CD8-positive, alpha-beta T cell (primary cell): ENCODE measurements at regions of chr7 and their contacts with region 1.

Region 1: DNA sequence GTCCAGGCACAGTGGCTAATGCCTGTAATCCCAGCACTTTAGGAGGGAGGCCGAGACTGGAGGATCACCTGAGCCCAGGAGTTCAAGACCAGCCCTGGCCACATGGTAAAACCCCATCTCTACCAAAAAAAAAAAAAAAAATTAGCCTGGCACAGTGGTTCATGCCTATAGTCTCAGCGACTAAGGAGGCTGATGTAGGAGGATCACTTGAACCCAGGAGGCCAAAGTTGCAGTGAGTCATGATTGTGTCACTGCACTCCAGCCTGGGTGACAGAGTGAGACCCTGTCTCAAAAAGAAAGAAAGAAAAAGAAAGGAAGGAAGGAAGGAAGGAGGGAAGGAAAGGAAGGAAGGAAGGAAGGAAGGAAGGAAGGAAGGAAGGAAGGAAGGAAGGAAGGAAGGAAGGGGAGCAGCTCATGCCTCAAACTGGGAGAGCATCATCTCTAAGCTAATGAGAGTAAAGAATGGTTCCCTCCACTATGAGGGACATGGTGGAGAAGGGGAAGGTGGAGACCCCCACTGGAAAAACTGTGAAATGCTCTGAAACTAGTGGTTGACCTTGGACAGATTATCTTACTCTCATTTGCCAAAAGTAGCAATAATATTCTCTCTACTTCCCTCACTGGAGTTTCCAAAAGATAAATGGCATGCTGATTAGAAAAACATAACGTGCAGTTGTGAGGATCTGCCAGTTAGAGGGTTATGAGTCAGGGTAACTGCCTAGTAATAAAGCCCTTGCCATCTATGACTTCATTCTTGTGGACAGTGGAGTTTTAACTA is 16.8 kb downstream of the GIMAP5 start:
- DNase-seq: peak in 2 of 9 experiments; percentile 57 to 73
- ATAC-seq: peak; percentile 8
- H3K4me3 ChIP-seq: no peak overlapping the region
- H3K4me3 Mint-ChIP-seq: peak overlapping the region; percentile 19
- H3K27ac ChIP-seq: peak overlapping the region in 1 of 2 experiments; percentile 83
- H3K27ac Mint-ChIP-seq: peak overlapping the region; percentile 94
- H3K4me1 ChIP-seq: peaks cover 76% of the 10 kb centered on the region
- H3K4me1 Mint-ChIP-seq: peaks cover 72% of the 10 kb centered on the region
- H3K27me3 ChIP-seq: no peaks in the 10 kb centered on the region
- H3K27me3 Mint-ChIP-seq: no peaks in the 10 kb centered on the region
- CTCF ChIP-seq: no peak

Region 2: GRCh38 chr7:150307904-150308303 is 446.1 kb before region 1 on chr7:
- CTCF ChIA-PET with region 1: no interaction called
- POLR2A ChIA-PET with region 1: no interaction called
- intact Hi-C with region 1: no loop called
- DNase-seq: no peak
- ATAC-seq: no peak
- H3K4me3 ChIP-seq: no peak overlapping the region
- H3K4me3 Mint-ChIP-seq: no peak overlapping the region
- H3K27ac ChIP-seq: no peak overlapping the region
- H3K27ac Mint-ChIP-seq: peak overlapping the region; percentile 9
- H3K4me1 ChIP-seq: no peaks in the 10 kb centered on the region
- H3K4me1 Mint-ChIP-seq: no peaks in the 10 kb centered on the region
- H3K27me3 ChIP-seq: no peaks in the 10 kb centered on the region
- H3K27me3 Mint-ChIP-seq: no peaks in the 10 kb centered on the region
- CTCF ChIP-seq: no peak

Region 3: DNA sequence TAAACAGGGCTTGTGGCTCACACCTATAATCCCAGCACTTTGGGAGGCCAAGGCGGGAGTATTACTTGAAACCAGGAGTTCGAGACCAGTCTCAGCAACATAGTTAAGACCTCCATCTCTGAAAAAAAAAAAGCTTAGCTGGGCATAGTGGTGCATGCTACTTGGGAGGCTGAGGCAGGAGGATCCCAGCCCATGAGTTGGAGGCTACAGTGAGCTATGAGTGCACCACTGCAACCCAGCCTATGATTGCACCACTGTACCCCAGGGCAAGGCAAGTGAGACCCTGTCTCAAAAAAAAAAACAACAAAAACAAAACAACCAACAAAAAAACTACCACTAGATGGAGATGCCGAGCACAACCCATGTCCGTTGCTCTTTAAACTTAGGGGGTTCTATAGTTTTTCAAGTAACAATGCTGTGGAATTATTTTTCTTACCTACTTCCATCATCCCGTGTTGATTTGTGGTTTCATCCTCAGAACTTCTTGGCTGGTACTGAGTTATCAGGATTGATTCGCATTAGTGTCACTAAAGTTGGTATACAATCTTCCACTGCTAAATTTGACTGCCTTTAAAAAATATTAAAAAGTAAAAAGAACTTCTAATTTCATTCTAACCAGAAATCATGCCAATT is 397.6 kb before region 1 on chr7:
- CTCF ChIA-PET with region 1: interaction called, 3 read pairs
- POLR2A ChIA-PET with region 1: interaction called, 4 read pairs
- intact Hi-C with region 1: loop called (anchors 1 to 5 kb)
- DNase-seq: peak in 2 of 9 experiments; percentile 73 to 79
- ATAC-seq: no peak
- H3K4me3 ChIP-seq: no peak overlapping the region
- H3K4me3 Mint-ChIP-seq: peak overlapping the region; percentile 18
- H3K27ac ChIP-seq: no peak overlapping the region
- H3K27ac Mint-ChIP-seq: peak overlapping the region; percentile 46
- H3K4me1 ChIP-seq: peaks cover 37% of the 10 kb centered on the region
- H3K4me1 Mint-ChIP-seq: peaks cover 39% of the 10 kb centered on the region
- H3K27me3 ChIP-seq: peaks cover 0 to 7% of the 10 kb centered on the region in 2 experiments
- H3K27me3 Mint-ChIP-seq: no peaks in the 10 kb centered on the region
- CTCF ChIP-seq: peak; percentile 78

Region 4: DNA sequence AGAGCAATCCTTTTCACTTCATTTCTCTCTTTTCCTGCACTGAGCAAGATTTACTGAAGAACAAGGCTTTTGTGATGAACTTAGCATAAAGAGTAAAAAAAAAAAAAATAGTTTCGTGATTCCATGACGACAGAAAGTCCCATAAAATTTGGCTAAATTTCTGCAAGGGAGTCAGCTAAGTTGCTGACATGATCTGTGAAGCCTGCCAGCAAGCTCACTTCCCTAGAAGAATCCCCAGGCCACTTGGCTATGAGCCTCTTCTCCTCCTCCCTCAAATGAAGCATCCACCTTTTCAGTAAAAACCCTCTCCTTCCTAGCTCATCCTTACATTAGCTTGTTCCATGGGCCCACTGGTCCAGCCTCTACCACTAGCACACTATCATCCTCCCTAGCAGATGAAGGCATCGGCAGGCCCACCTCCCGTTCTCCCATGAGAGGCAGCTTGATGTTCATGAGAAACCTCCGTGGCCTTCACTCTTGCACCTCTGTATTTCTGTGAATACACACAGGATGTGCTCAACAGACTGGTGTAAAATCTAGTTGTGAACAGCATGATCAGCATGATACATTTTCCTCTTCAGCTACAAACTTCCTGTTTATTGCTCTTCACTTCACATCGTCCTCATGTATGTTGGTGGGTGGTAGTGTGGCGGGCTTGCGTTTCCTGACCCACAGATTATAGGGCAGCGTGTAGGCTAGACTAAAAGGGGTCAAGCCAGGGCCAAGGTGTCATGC is 272.7 kb before region 1 on chr7:
- CTCF ChIA-PET with region 1: interaction called, 5 read pairs
- POLR2A ChIA-PET with region 1: interaction called, 21 read pairs
- intact Hi-C with region 1: no loop called
- DNase-seq: peak; percentile 27 to 84 (median 65)
- ATAC-seq: peak; percentile 63
- H3K4me3 ChIP-seq: peak overlapping the region; percentile 1 to 14
- H3K4me3 Mint-ChIP-seq: peak overlapping the region; percentile 81
- H3K27ac ChIP-seq: peak overlapping the region; percentile 55 to 91
- H3K27ac Mint-ChIP-seq: peak overlapping the region; percentile 100
- H3K4me1 ChIP-seq: peaks cover 89% of the 10 kb centered on the region
- H3K4me1 Mint-ChIP-seq: peaks cover 91% of the 10 kb centered on the region
- H3K27me3 ChIP-seq: no peaks in the 10 kb centered on the region
- H3K27me3 Mint-ChIP-seq: no peaks in the 10 kb centered on the region
- CTCF ChIP-seq: no peak

Region 5: DNA sequence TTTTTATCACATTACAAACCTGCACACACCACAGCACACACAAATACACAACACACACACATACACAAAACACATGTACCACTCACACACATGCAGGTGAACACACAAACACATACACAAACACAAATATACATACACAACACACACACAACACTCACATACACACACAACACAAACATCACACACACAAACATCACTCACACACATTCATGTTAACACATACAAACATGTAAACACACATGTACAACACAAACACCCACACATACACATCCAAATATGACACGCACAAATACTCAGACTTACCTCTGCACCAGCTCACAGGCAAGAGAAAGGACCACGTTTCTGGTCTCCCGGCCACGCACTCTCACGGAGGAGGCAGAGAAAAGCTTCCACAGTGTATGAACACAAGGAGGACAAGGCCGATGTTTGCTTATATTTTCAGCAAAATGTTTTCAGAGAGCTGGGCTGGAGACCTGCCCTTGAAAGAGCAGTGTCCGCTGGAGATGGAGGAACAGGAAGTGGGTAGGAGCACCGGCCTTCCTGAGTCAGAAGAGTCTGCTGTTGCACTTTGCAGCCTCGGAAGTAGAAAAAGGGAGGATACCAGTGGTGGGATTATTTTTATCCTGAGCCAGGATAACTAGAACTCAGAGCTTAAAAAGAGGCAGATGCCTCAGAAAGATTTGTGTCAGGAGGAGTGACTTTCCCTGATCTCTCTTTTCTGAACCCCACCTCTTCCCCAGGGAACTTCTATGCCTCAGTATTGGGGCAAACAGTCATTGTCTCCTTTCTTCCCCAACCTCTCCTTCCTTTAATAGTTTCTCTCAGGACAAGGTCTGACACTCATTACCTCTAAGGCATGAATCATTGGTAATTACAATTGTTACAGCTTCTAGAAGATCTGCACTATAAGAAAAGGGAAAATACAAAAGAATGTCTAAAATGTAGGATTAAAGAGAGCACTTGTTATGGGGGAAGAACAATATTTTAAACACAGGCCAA is 121.8 kb before region 1 on chr7 and contains the start of gene GIMAP6:
- CTCF ChIA-PET with region 1: interaction called, 14 read pairs
- POLR2A ChIA-PET with region 1: interaction called, 21 read pairs
- intact Hi-C with region 1: loop called (anchors 2 to 5 kb)
- DNase-seq: peak in 8 of 9 experiments; percentile 33 to 79 (median 50)
- ATAC-seq: peak; percentile 61
- H3K4me3 ChIP-seq: peak within 1 kb of the TSS; percentile 82 to 85
- H3K4me3 Mint-ChIP-seq: peak within 1 kb of the TSS; percentile 97
- H3K27ac ChIP-seq: peak within 1 kb of the TSS; percentile 58 to 83
- H3K27ac Mint-ChIP-seq: peak within 1 kb of the TSS; percentile 96
- H3K4me1 ChIP-seq: peaks cover 54% of the 10 kb centered on the region
- H3K4me1 Mint-ChIP-seq: peaks cover 86% of the 10 kb centered on the region
- H3K27me3 ChIP-seq: no peaks in the 10 kb centered on the region
- H3K27me3 Mint-ChIP-seq: no peaks in the 10 kb centered on the region
- CTCF ChIP-seq: no peak
- total RNA-seq, gene GIMAP6: 10.5 to 10.8 TPM

Region 6: GRCh38 chr7:150685219-150686029 is 68.6 kb before region 1 on chr7 and contains the start of gene GIMAP2:
- CTCF ChIA-PET with region 1: interaction called, 11 read pairs
- POLR2A ChIA-PET with region 1: interaction called, 114 read pairs
- intact Hi-C with region 1: loop called in 1 of 2 experiments (anchors 2 kb)
- DNase-seq: peak in 3 of 9 experiments; percentile 26 to 81 (median 68)
- ATAC-seq: peak; percentile 77
- H3K4me3 ChIP-seq: peak within 1 kb of the TSS; percentile 62 to 69
- H3K4me3 Mint-ChIP-seq: peak within 1 kb of the TSS; percentile 96
- H3K27ac ChIP-seq: peak within 1 kb of the TSS; percentile 66 to 81
- H3K27ac Mint-ChIP-seq: peak within 1 kb of the TSS; percentile 99
- H3K4me1 ChIP-seq: peaks cover 54% of the 10 kb centered on the region
- H3K4me1 Mint-ChIP-seq: peaks cover 82% of the 10 kb centered on the region
- H3K27me3 ChIP-seq: no peaks in the 10 kb centered on the region
- H3K27me3 Mint-ChIP-seq: no peaks in the 10 kb centered on the region
- CTCF ChIP-seq: no peak
- total RNA-seq, gene GIMAP2: 58.4 to 58.8 TPM

Region 7: GRCh38 chr7:150803161-150803860 is 49.3 kb after region 1 on chr7:
- CTCF ChIA-PET with region 1: no interaction called
- POLR2A ChIA-PET with region 1: no interaction called
- intact Hi-C with region 1: no loop called
- DNase-seq: no peak
- ATAC-seq: no peak
- H3K4me3 ChIP-seq: no peak overlapping the region
- H3K4me3 Mint-ChIP-seq: no peak overlapping the region
- H3K27ac ChIP-seq: no peak overlapping the region
- H3K27ac Mint-ChIP-seq: no peak overlapping the region
- H3K4me1 ChIP-seq: peaks cover 17% of the 10 kb centered on the region
- H3K4me1 Mint-ChIP-seq: peaks cover 12% of the 10 kb centered on the region
- H3K27me3 ChIP-seq: peaks cover 16 to 25% of the 10 kb centered on the region in 2 experiments
- H3K27me3 Mint-ChIP-seq: peaks cover 50% of the 10 kb centered on the region
- CTCF ChIP-seq: no peak